K562 (cell line): ENCODE measurements at regions of chr5 and their contacts with region 1.

Region 1: GRCh38 chr5:132526290-132526973 is 16.9 kb downstream of the IL5 start:
- DNase-seq: peak; percentile 70 to 80 (median 72)
- ATAC-seq: peak; percentile 89
- H3K4me3 ChIP-seq: peak overlapping the region; percentile 22
- H3K27ac ChIP-seq: peak overlapping the region; percentile 18; the same call in 1 of the 3 replicates
- H3K4me1 ChIP-seq: peaks cover 4 to 26% of the 10 kb centered on the region in 2 experiments; a peak in 4 of 5 replicates
- H3K27me3 ChIP-seq: no peaks in the 10 kb centered on the region
- CTCF ChIP-seq: peak; percentile 75 to 98 (median 89)
- EP300 ChIP-seq: no peak
- POLR2A ChIP-seq: no peak
- RAD21 ChIP-seq: peak; percentile 75 to 87

Region 2: DNA sequence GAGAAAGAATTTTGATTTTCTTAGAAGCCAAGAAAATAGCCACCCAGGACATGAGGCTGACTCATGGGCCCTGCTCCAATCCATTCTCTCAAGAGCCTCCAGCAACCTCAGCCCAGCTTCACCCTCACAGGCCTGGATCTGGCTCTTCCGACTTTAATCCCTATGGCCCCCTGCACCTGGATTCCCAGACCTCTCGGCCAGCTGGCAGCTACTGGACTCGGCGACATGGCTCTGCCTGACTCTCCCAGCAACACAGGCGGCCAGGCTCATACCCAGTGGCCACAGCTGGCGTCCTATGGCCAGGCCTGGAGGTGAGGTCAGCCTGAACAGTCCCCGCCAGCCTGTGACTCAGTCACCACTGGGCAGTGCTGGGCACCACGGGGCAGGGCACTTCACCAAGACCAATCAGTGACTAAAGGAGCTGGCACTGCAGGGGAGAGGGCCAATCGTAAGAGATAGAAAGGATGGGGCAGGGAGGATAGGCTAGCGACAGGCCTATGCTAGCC is 275.2 kb before region 1 on chr5:
- CTCF ChIA-PET with region 1: no interaction called
- POLR2A ChIA-PET with region 1: no interaction called
- in situ Hi-C with region 1: no loop called
- intact Hi-C with region 1: no loop called
- DNase-seq: no peak
- ATAC-seq: no peak
- H3K4me3 ChIP-seq: no peak overlapping the region
- H3K27ac ChIP-seq: no peak overlapping the region
- H3K4me1 ChIP-seq: peaks cover 0 to 3% of the 10 kb centered on the region in 2 experiments; a peak in 1 of 5 replicates
- H3K27me3 ChIP-seq: no peaks in the 10 kb centered on the region
- CTCF ChIP-seq: no peak
- EP300 ChIP-seq: no peak
- POLR2A ChIP-seq: no peak
- RAD21 ChIP-seq: no peak

Region 3: GRCh38 chr5:132591145-132591544 is 64.7 kb after region 1 on chr5:
- CTCF ChIA-PET with region 1: interaction called, 3 read pairs
- POLR2A ChIA-PET with region 1: interaction called, 3 read pairs
- in situ Hi-C with region 1: no loop called
- intact Hi-C with region 1: loop called (anchors 5 kb)
- DNase-seq: peak in 1 of 4 experiments; percentile 27
- ATAC-seq: 0 out of 3 replicates have a peak, but pooled peaks have one; percentile 47
- H3K4me3 ChIP-seq: no peak overlapping the region
- H3K27ac ChIP-seq: no peak overlapping the region
- H3K4me1 ChIP-seq: no peaks in the 10 kb centered on the region
- H3K27me3 ChIP-seq: no peaks in the 10 kb centered on the region
- CTCF ChIP-seq: peak; percentile 27 to 45 (median 41); a peak in 3 of 6 replicates
- EP300 ChIP-seq: no peak
- POLR2A ChIP-seq: no peak
- RAD21 ChIP-seq: peak; percentile 21 to 51; a peak in 3 of 4 replicates

Region 4: DNA sequence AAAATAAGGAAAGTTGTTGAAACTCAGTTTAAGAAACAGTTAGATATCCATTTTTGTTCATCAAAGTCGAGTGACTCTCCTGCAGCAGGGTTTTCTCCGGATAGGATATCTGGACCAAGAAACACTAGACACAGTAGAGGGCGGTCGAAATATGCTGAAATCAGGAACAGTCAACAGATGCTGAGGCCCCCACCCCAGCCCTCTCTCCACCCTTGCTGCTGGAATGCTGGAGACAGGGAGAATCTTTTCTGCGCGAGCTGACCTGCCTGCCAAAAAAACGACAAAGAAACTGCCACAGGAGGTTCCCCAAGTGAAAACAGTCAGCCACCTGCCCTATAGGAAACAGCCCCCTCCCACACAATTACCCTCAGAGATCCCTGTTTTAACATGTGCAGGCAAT is 127.3 kb after region 1 on chr5:
- CTCF ChIA-PET with region 1: no interaction called
- POLR2A ChIA-PET with region 1: no interaction called
- in situ Hi-C with region 1: no loop called
- intact Hi-C with region 1: loop called (anchors 5 kb)
- DNase-seq: peak in 1 of 4 experiments; percentile 36
- ATAC-seq: peak; percentile 53; the same call in 2 of the 3 replicates
- H3K4me3 ChIP-seq: no peak overlapping the region
- H3K27ac ChIP-seq: no peak overlapping the region
- H3K4me1 ChIP-seq: peaks cover 16 to 18% of the 10 kb centered on the region in 2 experiments; a peak in 4 of 5 replicates
- H3K27me3 ChIP-seq: no peaks in the 10 kb centered on the region
- CTCF ChIP-seq: 0 out of 6 replicates have a peak, but pooled peaks of 1 of the 3 experiments have one; percentile 17
- EP300 ChIP-seq: no peak
- POLR2A ChIP-seq: no peak
- RAD21 ChIP-seq: peak in 1 of 2 experiments; percentile 31; a peak in 1 of 4 replicates

Region 5: GRCh38 chr5:132714456-132715307 is 188.2 kb after region 1 on chr5:
- CTCF ChIA-PET with region 1: no interaction called
- POLR2A ChIA-PET with region 1: no interaction called
- in situ Hi-C with region 1: no loop called
- intact Hi-C with region 1: loop called (anchors 1 kb)
- DNase-seq: peak in 3 of 4 experiments; percentile 6 to 22 (median 15)
- ATAC-seq: no peak; the same call in 2 of the 3 replicates
- H3K4me3 ChIP-seq: no peak overlapping the region
- H3K27ac ChIP-seq: no peak overlapping the region
- H3K4me1 ChIP-seq: no peaks in the 10 kb centered on the region
- H3K27me3 ChIP-seq: no peaks in the 10 kb centered on the region
- CTCF ChIP-seq: peak; percentile 13 to 55 (median 39); a peak in 4 of 6 replicates
- EP300 ChIP-seq: no peak
- POLR2A ChIP-seq: no peak
- RAD21 ChIP-seq: peak; percentile 37 to 70

Region 6: GRCh38 chr5:132820162-132820754 is 293.8 kb after region 1 on chr5:
- CTCF ChIA-PET with region 1: interaction called, 8 read pairs
- POLR2A ChIA-PET with region 1: no interaction called
- in situ Hi-C with region 1: no loop called
- intact Hi-C with region 1: loop called (anchors 1 kb)
- DNase-seq: peak; percentile 84 to 97 (median 88)
- ATAC-seq: peak; percentile 96
- H3K4me3 ChIP-seq: no peak overlapping the region
- H3K27ac ChIP-seq: no peak overlapping the region
- H3K4me1 ChIP-seq: peaks cover 2 to 19% of the 10 kb centered on the region in 2 experiments; a peak in 3 of 5 replicates
- H3K27me3 ChIP-seq: no peaks in the 10 kb centered on the region
- CTCF ChIP-seq: peak; percentile 90 to 98 (median 96)
- EP300 ChIP-seq: peak; percentile 11; the same call in 1 of the 2 replicates
- POLR2A ChIP-seq: no peak
- RAD21 ChIP-seq: peak; percentile 98 to 99

Region 7: GRCh38 chr5:132873119-132873929 is 346.9 kb after region 1 on chr5 and contains the start of gene LEAP2:
- CTCF ChIA-PET with region 1: no interaction called
- POLR2A ChIA-PET with region 1: no interaction called
- in situ Hi-C with region 1: loop called (anchors 5 kb)
- intact Hi-C with region 1: no loop called
- DNase-seq: peak in 2 of 4 experiments; percentile 52 to 63
- ATAC-seq: peak; percentile 74
- H3K4me3 ChIP-seq: no peak within 1 kb of the TSS
- H3K27ac ChIP-seq: no peak within 1 kb of the TSS
- H3K4me1 ChIP-seq: peaks cover 0 to 19% of the 10 kb centered on the region in 2 experiments; a peak in 2 of 5 replicates
- H3K27me3 ChIP-seq: no peaks in the 10 kb centered on the region
- CTCF ChIP-seq: no peak
- EP300 ChIP-seq: no peak
- POLR2A ChIP-seq: 0 out of 2 replicates have a peak, but pooled peaks have one; percentile 36
- RAD21 ChIP-seq: peak in 1 of 2 experiments; percentile 7; a peak in 1 of 4 replicates
- polyA plus RNA-seq, gene LEAP2: 2.0 to 2.9 TPM

Region 8: GRCh38 chr5:132883261-132883834 is 356.9 kb after region 1 on chr5:
- CTCF ChIA-PET with region 1: interaction called, 4 read pairs
- POLR2A ChIA-PET with region 1: no interaction called
- in situ Hi-C with region 1: no loop called
- intact Hi-C with region 1: loop called (anchors 1 kb)
- DNase-seq: peak; percentile 45 to 79 (median 56)
- ATAC-seq: peak; percentile 99
- H3K4me3 ChIP-seq: no peak overlapping the region
- H3K27ac ChIP-seq: no peak overlapping the region
- H3K4me1 ChIP-seq: no peaks in the 10 kb centered on the region
- H3K27me3 ChIP-seq: no peaks in the 10 kb centered on the region
- CTCF ChIP-seq: peak; percentile 74 to 83 (median 77)
- EP300 ChIP-seq: no peak
- POLR2A ChIP-seq: no peak
- RAD21 ChIP-seq: peak; percentile 83 to 88

Region 9: DNA sequence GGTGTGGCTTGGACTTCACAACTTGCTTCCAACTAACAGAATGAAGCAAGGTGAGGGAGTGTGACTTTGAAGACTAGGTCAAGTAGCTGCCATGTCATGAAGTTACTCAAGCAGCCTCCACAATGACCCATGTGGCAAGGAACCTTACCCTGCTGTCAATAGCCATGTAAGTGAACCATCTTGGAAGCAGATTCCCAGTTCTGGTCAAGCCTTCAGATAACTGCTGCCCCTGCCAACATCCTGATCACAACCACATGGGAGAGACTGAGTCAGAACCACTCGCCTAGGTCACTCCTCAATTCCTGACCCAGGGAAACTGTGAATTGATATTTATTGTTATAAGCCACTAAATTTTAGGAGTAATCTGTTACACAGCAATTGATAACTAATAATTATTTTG is 489.0 kb after region 1 on chr5:
- CTCF ChIA-PET with region 1: no interaction called
- POLR2A ChIA-PET with region 1: no interaction called
- in situ Hi-C with region 1: no loop called
- intact Hi-C with region 1: no loop called
- DNase-seq: no peak
- ATAC-seq: 0 out of 3 replicates have a peak, but pooled peaks have one; percentile 38
- H3K4me3 ChIP-seq: no peak overlapping the region
- H3K27ac ChIP-seq: no peak overlapping the region
- H3K4me1 ChIP-seq: no peaks in the 10 kb centered on the region; a peak in 1 of 5 replicates
- H3K27me3 ChIP-seq: no peaks in the 10 kb centered on the region
- CTCF ChIP-seq: no peak
- EP300 ChIP-seq: no peak
- POLR2A ChIP-seq: no peak
- RAD21 ChIP-seq: no peak